ENCODE measurements at regions of chr16 and their contacts with region 1.

Region 1: GRCh38 chr16:14337303-14338191 is 266.4 kb downstream of the MRTFB start:
- DNase-seq: no peak
- H3K4me3 ChIP-seq: no peak overlapping the region
- H3K27ac ChIP-seq: no peak overlapping the region
- H3K4me1 ChIP-seq: no peaks in the 10 kb centered on the region
- H3K27me3 ChIP-seq: no peaks in the 10 kb centered on the region
- CTCF ChIP-seq: no peak

Region 2: DNA sequence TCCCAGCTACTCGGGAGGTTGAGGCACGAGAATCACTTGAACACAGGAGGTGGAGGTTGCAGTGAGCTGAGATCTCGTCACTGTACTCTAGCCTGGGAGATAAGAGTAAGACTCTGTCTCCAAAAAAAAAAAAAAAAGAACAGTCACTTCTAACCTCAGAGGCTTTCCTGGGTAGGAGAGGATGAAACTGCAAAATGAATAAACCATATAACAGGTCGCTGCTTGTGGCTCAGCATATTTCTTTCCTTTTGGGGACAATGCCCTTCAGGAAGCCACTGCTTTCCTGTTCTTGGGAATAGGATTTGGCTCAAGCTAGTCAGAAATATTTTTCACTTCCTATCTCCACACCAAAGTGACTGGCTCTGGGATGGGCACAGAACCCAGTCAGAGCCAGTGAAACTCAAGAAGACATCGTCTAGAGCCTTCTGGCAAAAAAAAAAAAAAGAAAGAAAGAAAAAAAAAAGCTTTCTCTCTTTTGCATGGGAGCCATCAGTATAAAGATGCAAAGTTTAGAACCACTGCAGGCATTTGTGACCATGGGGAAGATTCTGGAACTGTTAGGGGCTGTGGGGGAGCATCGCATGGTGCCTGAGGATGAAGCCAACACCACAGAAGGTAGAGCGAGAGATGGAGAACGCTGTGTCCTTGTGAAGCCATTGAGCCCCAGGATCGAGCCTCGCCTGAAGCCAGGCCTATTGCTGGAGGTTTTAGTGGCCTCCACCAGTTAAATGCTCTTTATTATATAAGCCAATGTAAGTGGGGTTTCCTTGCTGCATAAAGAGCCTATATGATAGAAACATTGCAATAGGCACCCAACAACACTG is 338.3 kb before region 1 on chr16:
- CTCF ChIA-PET with region 1: no interaction called
- POLR2A ChIA-PET with region 1: interaction called, 14 read pairs
- intact Hi-C with region 1: no loop called
- DNase-seq: no peak
- H3K4me3 ChIP-seq: no peak overlapping the region
- H3K27ac ChIP-seq: no peak overlapping the region
- H3K4me1 ChIP-seq: peaks cover 21% of the 10 kb centered on the region
- H3K27me3 ChIP-seq: no peaks in the 10 kb centered on the region
- CTCF ChIP-seq: no peak

Region 3: GRCh38 chr16:14310519-14310991 is 27.0 kb before region 1 on chr16:
- CTCF ChIA-PET with region 1: interaction called, 18 read pairs
- POLR2A ChIA-PET with region 1: interaction called, 9 read pairs
- intact Hi-C with region 1: no loop called
- DNase-seq: peak; percentile 52 to 64
- H3K4me3 ChIP-seq: peak overlapping the region; percentile 96; the same call in 1 of the 2 replicates
- H3K27ac ChIP-seq: peak overlapping the region; percentile 99
- H3K4me1 ChIP-seq: peaks cover 81% of the 10 kb centered on the region
- H3K27me3 ChIP-seq: no peaks in the 10 kb centered on the region
- CTCF ChIP-seq: peak; percentile 48; the same call in 1 of the 2 replicates

Region 4: DNA sequence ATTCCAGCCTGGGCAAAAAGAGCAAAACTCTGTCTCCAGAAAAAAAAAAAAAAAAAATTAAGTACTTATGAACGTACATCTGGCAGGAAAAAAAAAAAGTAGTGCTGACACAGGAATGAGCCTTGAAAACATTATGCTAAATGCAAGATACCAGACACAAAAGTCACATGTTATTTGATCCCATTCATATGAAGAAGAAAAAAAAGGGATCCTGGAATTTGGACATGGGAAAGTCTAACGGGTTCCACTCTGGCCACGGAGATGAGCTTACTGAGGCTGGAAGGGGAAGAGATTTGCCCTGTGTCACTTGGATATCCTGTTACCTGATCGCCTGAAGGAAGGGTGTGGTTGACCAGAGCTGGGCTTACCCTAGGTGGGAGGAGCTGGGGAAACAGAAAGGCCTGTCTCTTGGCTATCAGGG is 40.6 kb after region 1 on chr16:
- CTCF ChIA-PET with region 1: no interaction called
- POLR2A ChIA-PET with region 1: interaction called, 23 read pairs
- intact Hi-C with region 1: no loop called
- DNase-seq: peak; percentile 81 to 88
- H3K4me3 ChIP-seq: no peak overlapping the region; the same call in 1 of the 2 replicates
- H3K27ac ChIP-seq: peak overlapping the region; percentile 92
- H3K4me1 ChIP-seq: peaks cover 57% of the 10 kb centered on the region
- H3K27me3 ChIP-seq: no peaks in the 10 kb centered on the region
- CTCF ChIP-seq: no peak

Measured in PC-9 (cell line).